ENCODE measurements at regions of chr12 and their contacts with region 1.

Region 1: DNA sequence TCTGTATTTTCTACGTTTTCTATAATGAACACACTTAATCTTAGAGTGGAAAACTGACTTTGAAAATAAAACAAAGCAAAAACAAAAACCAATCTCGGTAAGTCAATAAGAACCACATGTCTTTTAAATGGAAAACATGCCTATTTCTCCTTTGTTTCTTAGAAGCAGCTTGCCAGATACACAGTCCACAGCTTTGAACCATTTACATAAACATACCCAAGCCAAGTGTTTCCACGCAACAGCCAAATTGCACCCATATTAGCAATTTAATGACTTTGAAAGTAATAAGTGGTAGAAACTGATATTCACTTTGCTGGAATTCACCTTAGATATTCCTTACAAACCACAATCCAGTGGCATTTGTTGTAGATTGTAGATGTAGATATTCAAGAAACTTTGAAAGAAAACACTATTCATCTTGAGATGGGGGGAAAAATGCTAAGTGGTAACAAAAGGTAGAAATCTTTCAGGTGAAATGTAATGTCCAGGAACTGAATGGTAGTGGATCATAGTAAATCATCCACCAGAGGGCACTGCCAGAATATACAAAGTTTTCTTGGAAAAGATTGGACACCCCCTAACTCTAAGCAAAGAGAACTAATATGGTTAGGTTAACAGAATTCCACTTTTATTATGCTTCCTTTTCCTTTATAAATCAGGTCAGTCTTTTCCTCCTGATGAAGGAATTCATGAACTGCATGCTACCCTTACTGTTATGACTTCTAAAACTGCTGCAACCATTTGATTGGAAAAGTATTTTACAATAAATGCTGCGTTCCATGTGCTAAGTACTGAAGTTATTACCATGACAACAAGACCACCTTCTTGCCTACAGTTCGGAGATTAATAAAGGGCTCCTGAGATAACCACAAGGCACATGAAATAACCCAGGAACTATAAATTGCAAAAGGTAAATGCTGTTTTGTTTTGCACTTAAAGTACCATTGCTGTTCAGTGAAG is 69.8 kb downstream of the RERG start:
- DNase-seq: no peak
- ATAC-seq: no peak
- H3K4me3 ChIP-seq: no peak overlapping the region
- H3K27ac ChIP-seq: no peak overlapping the region
- H3K4me1 ChIP-seq: no peaks in the 10 kb centered on the region
- H3K27me3 ChIP-seq: no peaks in the 10 kb centered on the region
- CTCF ChIP-seq: peak; percentile 40; the same call in 1 of the 2 replicates

Region 2: GRCh38 chr12:15220994-15221885 is 69.8 kb after region 1 on chr12 and contains the start of gene RERG:
- CTCF ChIA-PET with region 1: no interaction called
- POLR2A ChIA-PET with region 1: no interaction called
- in situ Hi-C with region 1: no loop called
- intact Hi-C with region 1: loop called (anchors 2 kb)
- DNase-seq: peak; percentile 33
- ATAC-seq: peak; percentile 100
- H3K4me3 ChIP-seq: peak within 1 kb of the TSS; percentile 28 to 50
- H3K27ac ChIP-seq: no peak within 1 kb of the TSS
- H3K4me1 ChIP-seq: no peaks in the 10 kb centered on the region; the same call in 1 of the 2 replicates
- H3K27me3 ChIP-seq: peaks cover 2% of the 10 kb centered on the region; the same call in 1 of the 2 replicates
- CTCF ChIP-seq: peak; percentile 93
- total RNA-seq, gene RERG: not detected

Region 3: DNA sequence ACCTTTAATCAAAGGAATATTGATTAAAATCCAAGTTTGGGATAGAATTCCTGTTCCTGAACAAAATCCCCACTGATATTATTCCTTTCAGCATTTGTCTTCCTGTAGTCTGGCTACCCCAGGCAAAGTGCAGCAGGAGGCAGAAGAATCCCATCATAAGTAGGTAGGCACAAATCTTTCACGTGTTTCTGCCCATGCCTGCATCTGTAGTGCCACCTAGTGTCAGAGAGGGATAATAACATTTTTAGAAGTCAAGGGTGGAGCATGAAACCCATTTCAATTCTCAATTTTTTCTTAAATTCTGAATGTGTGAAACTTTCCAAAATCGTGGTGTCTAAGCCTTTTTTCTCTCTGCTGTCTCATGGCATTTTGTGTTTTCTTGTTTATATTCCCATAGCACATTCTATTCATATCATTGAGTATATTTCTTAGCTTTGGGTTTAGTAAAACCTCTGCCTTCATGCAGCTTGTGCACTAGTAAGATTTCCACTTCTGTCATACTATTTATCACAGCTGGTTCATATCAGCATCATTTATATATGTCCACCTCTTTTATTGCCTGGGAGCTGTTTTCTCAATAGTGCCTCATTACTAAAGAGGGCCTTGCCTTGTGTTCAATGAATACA is 117.6 kb after region 1 on chr12:
- CTCF ChIA-PET with region 1: no interaction called
- POLR2A ChIA-PET with region 1: no interaction called
- in situ Hi-C with region 1: no loop called
- intact Hi-C with region 1: loop called (anchors 2 kb)
- DNase-seq: peak; percentile 22
- ATAC-seq: peak; percentile 79
- H3K4me3 ChIP-seq: no peak overlapping the region
- H3K27ac ChIP-seq: no peak overlapping the region
- H3K4me1 ChIP-seq: no peaks in the 10 kb centered on the region
- H3K27me3 ChIP-seq: no peaks in the 10 kb centered on the region
- CTCF ChIP-seq: peak; percentile 83

Measured in Panc1 (cell line).